ENCODE measurements at regions of chr6 and their contacts with region 1.

Region 1: GRCh38 chr6:155248008-155249001 is 15.5 kb upstream of the CLDN20 start:
- DNase-seq: peak; percentile 39 to 65 (median 58)
- H3K4me3 ChIP-seq: no peak overlapping the region
- H3K27ac ChIP-seq: peak overlapping the region in 1 of 2 donors; percentile 47
- H3K4me1 ChIP-seq: peaks cover 2% of the 10 kb centered on the region
- H3K27me3 ChIP-seq: no peaks in the 10 kb centered on the region
- CTCF ChIP-seq: peak; percentile 55 to 64 (median 59)
- EP300 ChIP-seq: no peak
- POLR2A ChIP-seq: no peak

Region 2: DNA sequence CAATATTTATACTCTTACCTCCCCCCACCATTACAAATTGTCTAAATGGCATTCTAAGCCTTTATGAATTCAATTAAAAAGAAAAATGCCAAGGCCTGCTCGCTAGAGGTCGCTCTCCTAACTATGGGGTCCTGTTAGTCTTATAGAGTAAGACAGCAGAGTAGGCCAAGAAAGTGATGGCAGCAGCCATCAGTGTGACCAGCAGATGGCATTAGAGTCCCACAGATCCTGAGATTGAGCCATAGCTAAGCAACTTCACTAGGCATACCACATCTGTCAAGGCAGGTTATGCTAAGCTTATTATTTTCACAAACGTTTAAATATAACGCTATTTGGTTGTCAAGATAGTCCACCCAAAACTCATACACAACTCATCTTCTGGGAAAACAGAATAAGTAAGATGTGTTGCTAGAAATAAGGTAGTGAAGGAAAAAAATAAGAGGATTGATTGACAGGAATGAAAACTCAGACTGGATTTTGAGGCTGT is 572.7 kb before region 1 on chr6:
- intact Hi-C with region 1: loop called in 1 of 4 experiments (anchors 5 kb)
- DNase-seq: peak; percentile 80 to 89 (median 87)
- H3K4me3 ChIP-seq: no peak overlapping the region
- H3K27ac ChIP-seq: no peak overlapping the region
- H3K4me1 ChIP-seq: no peaks in the 10 kb centered on the region
- H3K27me3 ChIP-seq: no peaks in the 10 kb centered on the region
- CTCF ChIP-seq: peak; percentile 95 to 98 (median 98)
- EP300 ChIP-seq: no peak
- POLR2A ChIP-seq: no peak

Region 3: GRCh38 chr6:155340464-155341129 is 92.3 kb after region 1 on chr6:
- intact Hi-C with region 1: no loop called
- DNase-seq: no peak
- H3K4me3 ChIP-seq: no peak overlapping the region
- H3K27ac ChIP-seq: no peak overlapping the region
- H3K4me1 ChIP-seq: no peaks in the 10 kb centered on the region
- H3K27me3 ChIP-seq: no peaks in the 10 kb centered on the region
- CTCF ChIP-seq: no peak
- EP300 ChIP-seq: no peak
- POLR2A ChIP-seq: no peak

Region 4: DNA sequence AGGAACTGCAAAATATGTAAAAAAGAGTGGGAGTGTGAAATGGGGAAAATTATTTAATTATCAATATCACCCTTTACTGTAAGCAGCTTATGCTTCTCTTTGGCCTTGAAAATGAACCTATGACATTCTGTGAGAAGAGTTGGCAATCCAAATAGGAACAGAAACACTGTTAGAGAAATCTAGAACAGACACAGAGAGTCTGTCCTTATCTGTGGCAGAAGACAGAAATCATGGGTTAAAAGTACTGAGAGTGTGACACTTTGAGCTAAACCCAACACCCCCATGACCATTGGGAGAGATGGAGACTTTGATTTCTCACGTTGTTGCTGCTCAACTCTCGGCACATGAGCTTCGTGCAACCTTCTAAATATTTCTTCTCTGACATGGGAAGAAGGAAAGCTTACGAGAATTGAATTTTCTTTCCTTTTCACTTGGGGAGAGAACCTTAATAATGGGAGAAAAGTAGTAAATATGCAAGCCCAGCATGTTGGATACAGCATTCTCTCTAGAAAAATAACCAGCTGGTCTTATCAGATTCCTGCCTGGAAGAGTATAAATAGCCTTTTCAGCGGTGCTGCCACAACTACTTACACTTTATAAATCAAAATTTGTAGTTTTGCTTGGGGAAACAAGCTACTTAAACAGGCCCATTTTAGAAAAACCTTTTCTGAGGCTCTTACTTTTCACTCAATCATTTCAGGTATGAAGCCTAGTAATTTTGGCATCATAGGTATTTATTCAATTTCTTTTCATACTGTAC is 256.7 kb after region 1 on chr6:
- intact Hi-C with region 1: loop called in 1 of 4 experiments (anchors 5 kb)
- DNase-seq: no peak
- H3K4me3 ChIP-seq: no peak overlapping the region
- H3K27ac ChIP-seq: no peak overlapping the region
- H3K4me1 ChIP-seq: no peaks in the 10 kb centered on the region
- H3K27me3 ChIP-seq: no peaks in the 10 kb centered on the region
- CTCF ChIP-seq: no peak
- EP300 ChIP-seq: no peak
- POLR2A ChIP-seq: no peak